OCI-LY7 (cell line): ENCODE measurements at regions of chr5 and their contacts with region 1.

Region 1: GRCh38 chr5:103232393-103232999 is 26.1 kb upstream of the MACIR start:
- DNase-seq: peak; percentile 50
- H3K4me3 ChIP-seq: no peak overlapping the region
- H3K27ac ChIP-seq: no peak overlapping the region
- H3K4me1 ChIP-seq: no peaks in the 10 kb centered on the region
- CTCF ChIP-seq: peak; percentile 95

Region 2: GRCh38 chr5:103041071-103041676 is 191.3 kb before region 1 on chr5:
- CTCF ChIA-PET with region 1: no interaction called
- POLR2A ChIA-PET with region 1: no interaction called
- intact Hi-C with region 1: no loop called
- DNase-seq: peak; percentile 15
- H3K4me3 ChIP-seq: no peak overlapping the region
- H3K27ac ChIP-seq: no peak overlapping the region
- H3K4me1 ChIP-seq: no peaks in the 10 kb centered on the region
- CTCF ChIP-seq: peak; percentile 55

Region 3: DNA sequence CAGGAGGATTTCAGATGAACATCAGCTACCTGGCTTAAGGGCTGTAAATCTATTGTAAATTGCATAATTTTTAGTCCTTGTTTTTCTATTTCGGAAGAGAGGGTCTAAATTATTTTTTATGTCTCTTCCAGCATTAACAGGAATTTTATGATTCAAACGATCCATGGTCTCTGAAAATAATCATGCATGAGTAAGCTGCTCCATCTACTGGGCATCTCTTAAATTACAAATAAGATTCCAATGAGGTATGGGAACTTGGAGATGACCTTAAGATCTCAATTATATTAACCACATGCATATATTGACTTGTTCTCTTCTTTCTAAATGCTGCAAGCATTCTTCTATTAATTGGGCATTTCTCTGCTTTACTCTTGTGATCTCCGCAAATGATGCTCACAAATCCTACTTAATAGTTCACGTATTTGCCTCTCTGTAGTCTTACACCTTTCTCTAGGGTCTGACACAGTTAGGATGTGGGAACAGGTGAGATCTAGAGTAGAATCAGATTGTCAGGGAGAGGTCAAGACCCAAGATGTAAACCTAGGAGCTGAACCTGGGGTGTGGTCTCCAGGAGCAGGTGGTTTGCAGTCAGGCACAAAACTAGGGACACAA is 243.2 kb after region 1 on chr5:
- CTCF ChIA-PET with region 1: interaction called, 3 read pairs
- POLR2A ChIA-PET with region 1: no interaction called
- intact Hi-C with region 1: loop called (anchors 2 kb)
- DNase-seq: peak; percentile 40
- H3K4me3 ChIP-seq: no peak overlapping the region
- H3K27ac ChIP-seq: no peak overlapping the region
- H3K4me1 ChIP-seq: no peaks in the 10 kb centered on the region
- CTCF ChIP-seq: peak; percentile 84